Left cardiac atrium (tissue), 4 donors: ENCODE measurements at regions of chr11 and their contacts with region 1.

Region 1: DNA sequence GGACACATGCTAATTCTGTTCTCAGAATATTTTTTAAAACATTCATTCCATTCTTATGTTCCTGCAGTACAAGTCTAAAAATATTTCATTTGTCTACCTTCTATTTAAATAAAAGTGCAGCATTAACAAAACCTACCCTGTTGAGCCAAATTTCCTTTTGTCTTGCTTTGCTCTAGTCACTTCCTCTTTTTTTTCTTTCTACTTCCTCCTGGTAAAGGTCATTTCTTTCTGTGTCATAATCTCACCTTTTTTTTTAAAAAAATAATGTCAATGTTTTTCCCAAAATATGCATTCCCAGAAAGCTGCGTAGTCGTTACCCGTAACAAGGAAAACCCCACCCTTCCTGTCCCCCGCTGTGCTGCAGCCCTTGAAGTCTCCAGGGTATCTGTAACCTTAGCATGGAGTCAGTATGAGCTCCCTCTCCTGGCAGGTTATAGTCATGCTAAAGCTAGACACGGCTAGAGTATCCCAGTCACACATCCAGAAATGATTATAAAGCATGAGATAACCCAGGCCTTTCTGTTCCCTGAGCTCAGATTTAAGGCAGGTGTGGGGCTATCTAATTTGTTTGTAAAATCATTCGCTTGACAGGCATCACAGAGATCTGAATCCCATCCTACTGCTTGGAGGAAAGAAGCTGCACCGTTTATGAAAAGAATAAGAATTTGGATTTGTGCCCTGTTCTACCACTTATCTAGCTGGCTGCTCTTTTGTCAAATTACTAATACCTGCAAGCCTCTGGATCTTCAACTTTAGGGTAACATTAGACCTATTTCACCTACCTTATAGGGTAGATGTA is 51.1 kb upstream of the EED start:
- DNase-seq: peak; percentile 85
- ATAC-seq: peak; percentile 98

Region 2: GRCh38 chr11:85961930-85962363 is 231.5 kb before region 1 on chr11:
- intact Hi-C with region 1: no loop called
- DNase-seq: no peak
- ATAC-seq: peak; percentile 26 to 68

Region 3: GRCh38 chr11:86041975-86042378 is 151.5 kb before region 1 on chr11:
- intact Hi-C with region 1: loop called (anchors 5 kb)
- DNase-seq: peak; percentile 34
- ATAC-seq: peak; percentile 81 to 95

Region 4: DNA sequence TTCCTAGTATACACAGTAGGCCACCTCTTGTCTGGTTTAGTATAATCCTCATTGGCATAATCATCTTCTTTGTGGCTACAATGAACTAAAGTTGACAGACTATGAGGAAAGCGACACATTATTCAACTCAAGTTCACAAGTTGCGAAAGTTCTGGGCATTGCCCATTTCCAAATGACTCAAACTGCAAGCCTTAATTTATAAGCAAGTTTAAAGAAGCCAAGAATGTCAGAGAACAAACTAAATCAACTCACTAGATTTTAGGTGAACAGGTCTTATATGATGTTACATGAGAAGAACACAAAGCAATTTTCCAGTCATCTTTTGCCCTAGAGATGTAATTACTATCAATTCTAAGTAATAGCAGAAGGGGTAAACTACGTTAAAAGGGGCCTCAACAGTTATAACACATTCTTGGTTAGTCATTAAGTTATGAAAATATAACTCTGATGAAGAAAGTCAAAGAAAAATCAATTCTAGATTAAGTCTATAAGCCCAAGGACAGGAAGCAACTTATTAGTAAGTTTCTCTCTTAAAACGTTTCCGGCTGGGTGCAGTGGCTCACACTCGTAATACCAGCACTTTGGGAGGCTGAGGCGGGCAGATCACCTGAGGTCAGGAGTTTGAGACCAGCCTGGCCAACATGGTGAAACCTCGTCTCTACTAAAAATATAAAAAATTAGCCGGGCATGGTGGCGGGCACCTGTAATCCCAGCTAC is 146.1 kb before region 1 on chr11:
- intact Hi-C with region 1: loop called (anchors 5 kb)
- DNase-seq: no peak
- ATAC-seq: peak; percentile 7 to 44

Region 5: GRCh38 chr11:86068951-86069407 is 124.5 kb before region 1 on chr11 and contains the start of gene PICALM:
- intact Hi-C with region 1: loop called in 1 of 2 experiments (anchors 5 kb)
- DNase-seq: peak; percentile 99
- ATAC-seq: peak; percentile 96 to 97
- total RNA-seq, gene PICALM: 148 to 260 TPM

Region 6: GRCh38 chr11:86230921-86231430 is 37.5 kb after region 1 on chr11:
- intact Hi-C with region 1: no loop called
- DNase-seq: no peak
- ATAC-seq: no peak